ENCODE measurements at regions of chr5 and their contacts with region 1.

Region 1: DNA sequence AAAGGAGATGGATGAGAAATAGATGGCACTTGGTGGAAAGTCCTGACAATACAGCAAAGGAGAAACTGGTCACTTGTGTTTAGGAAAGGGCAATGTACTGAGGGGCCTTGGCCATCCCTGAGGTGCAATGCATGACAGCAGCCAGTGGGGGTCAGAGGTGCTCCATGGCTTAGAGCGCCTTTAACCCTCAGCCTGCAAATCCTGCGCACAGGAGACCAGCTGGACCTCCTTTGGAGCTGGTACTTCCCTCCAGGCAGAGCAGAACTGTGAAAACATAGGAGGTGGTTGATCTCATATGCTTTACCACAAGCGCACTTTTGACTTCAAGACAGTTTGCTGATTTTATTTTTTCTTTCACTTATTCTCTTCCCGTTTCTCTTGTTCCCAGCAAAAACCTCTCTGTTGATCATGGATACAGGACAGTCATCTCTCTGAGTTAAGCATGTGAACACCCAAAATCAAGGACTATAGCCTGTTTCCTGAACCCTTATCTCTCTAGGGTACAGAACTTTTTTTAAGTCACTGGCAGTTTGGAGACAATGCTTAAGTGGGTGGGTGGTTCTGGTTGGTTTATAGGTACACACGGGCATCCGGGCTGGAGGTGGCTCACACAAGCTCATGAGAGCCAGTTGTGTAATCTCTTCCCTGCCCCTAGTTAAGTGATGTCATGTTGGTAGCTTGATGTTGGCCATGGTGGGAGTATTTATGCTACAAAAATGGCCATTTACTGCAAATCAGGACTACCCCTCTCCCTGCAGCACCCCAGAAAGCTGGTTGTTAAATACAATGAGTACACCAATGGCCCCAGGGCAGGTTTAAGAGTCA is 37.6 kb upstream of the ANKRD55 start:
- DNase-seq: peak; percentile 88
- H3K4me3 Mint-ChIP-seq: no peak overlapping the region
- H3K27ac Mint-ChIP-seq: peak overlapping the region; percentile 81
- H3K4me1 Mint-ChIP-seq: peaks cover 25% of the 10 kb centered on the region
- H3K27me3 Mint-ChIP-seq: no peaks in the 10 kb centered on the region
- CTCF ChIP-seq: peak; percentile 95

Region 2: DNA sequence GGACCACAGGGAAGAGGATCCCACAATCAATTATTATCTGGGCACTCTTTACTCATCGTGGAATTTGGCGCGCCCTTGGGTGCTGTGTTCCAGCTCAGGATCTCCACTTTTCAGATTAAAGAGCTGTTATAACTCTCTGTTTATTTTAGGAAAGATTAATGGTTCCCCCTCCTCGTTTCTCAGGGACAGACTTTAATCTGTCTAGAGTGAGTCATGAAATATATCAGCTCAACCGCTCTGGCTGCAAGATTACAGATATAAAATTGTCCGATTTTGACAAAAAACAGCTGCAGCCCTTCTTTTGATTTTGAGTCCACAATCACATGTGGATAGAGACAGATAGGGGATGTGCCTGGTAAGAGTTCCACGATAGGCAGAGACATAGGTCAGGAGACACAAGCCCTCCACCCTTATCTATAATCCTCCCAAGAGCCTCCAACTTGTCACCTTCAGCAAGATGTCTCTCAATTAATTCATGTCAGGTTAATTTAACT is 40.0 kb after region 1 on chr5:
- CTCF ChIA-PET with region 1: no interaction called
- intact Hi-C with region 1: no loop called
- DNase-seq: no peak
- H3K4me3 Mint-ChIP-seq: peak overlapping the region; percentile 37
- H3K27ac Mint-ChIP-seq: peak overlapping the region; percentile 12
- H3K4me1 Mint-ChIP-seq: peaks cover 68% of the 10 kb centered on the region
- H3K27me3 Mint-ChIP-seq: no peaks in the 10 kb centered on the region
- CTCF ChIP-seq: no peak

Region 3: DNA sequence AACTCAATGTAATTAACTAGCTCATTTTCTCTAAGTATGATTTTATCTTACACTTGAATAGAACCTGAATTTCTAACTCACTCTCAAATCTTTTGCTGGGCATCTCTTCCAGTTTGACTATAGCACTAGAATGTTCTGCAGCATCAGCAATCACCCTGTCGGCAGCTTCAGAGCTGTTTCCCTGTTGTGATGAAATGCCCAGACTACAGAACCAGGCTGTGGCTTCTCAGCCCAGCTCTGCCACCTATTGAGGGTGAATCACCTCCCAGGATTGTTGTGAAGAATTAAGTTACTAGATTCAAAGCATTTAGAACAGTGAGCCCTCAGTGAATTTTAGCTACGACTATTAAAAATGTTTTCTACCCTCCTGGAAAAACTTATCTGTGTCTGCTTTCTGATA is 52.7 kb after region 1 on chr5:
- CTCF ChIA-PET with region 1: interaction called, 3 read pairs
- intact Hi-C with region 1: loop called (anchors 1 kb)
- DNase-seq: peak; percentile 71
- H3K4me3 Mint-ChIP-seq: no peak overlapping the region
- H3K27ac Mint-ChIP-seq: peak overlapping the region; percentile 18
- H3K4me1 Mint-ChIP-seq: peaks cover 53% of the 10 kb centered on the region
- H3K27me3 Mint-ChIP-seq: no peaks in the 10 kb centered on the region
- CTCF ChIP-seq: no peak

Region 4: GRCh38 chr5:56479696-56480077 is 208.9 kb after region 1 on chr5:
- CTCF ChIA-PET with region 1: interaction called, 4 read pairs
- intact Hi-C with region 1: loop called (anchors 5 kb)
- DNase-seq: no peak
- H3K4me3 Mint-ChIP-seq: peak overlapping the region; percentile 68
- H3K27ac Mint-ChIP-seq: peak overlapping the region; percentile 73
- H3K4me1 Mint-ChIP-seq: peaks cover 31% of the 10 kb centered on the region
- H3K27me3 Mint-ChIP-seq: no peaks in the 10 kb centered on the region
- CTCF ChIP-seq: no peak

Region 5: GRCh38 chr5:56838409-56839039 is 567.7 kb after region 1 on chr5:
- CTCF ChIA-PET with region 1: interaction called, 45 read pairs
- intact Hi-C with region 1: loop called (anchors 1 kb)
- DNase-seq: no peak
- H3K4me3 Mint-ChIP-seq: peak overlapping the region; percentile 53
- H3K27ac Mint-ChIP-seq: peak overlapping the region; percentile 57
- H3K4me1 Mint-ChIP-seq: peaks cover 71% of the 10 kb centered on the region
- H3K27me3 Mint-ChIP-seq: no peaks in the 10 kb centered on the region
- CTCF ChIP-seq: peak; percentile 43

Region 6: GRCh38 chr5:57137401-57137800 is 866.6 kb after region 1 on chr5:
- CTCF ChIA-PET with region 1: interaction called, 4 read pairs
- intact Hi-C with region 1: loop called (anchors 10 kb)
- DNase-seq: no peak
- H3K4me3 Mint-ChIP-seq: peak overlapping the region; percentile 65
- H3K27ac Mint-ChIP-seq: no peak overlapping the region
- H3K4me1 Mint-ChIP-seq: no peaks in the 10 kb centered on the region
- H3K27me3 Mint-ChIP-seq: no peaks in the 10 kb centered on the region
- CTCF ChIP-seq: no peak